Sciatic nerve (tissue), 2 donors: ENCODE measurements at regions of chr6 and their contacts with region 1.

Region 1: GRCh38 chr6:135535989-135536414 is 38.5 kb upstream of the AHI1 start:
- DNase-seq: no peak
- ATAC-seq: peak; percentile 55

Region 2: DNA sequence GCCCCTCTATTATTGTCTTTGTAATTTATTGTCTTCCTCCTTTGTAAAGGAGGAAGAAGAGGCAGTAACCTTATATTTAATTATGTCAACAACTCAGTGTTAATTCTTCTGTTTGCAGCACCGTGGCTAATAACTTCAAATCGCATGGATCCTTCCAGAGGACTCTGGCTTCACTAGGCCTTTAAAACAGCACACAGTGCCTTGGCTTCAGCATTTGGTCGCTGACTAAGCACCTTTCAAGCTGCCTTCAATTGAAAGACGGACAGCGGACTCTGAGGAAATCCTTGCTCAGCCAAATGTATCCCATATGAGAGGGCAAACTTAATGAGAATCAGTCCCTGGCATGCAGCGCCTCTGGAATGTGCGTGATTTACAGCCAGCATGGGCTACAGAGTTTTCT is 1282.3 kb before region 1 on chr6:
- intact Hi-C with region 1: no loop called
- DNase-seq: no peak
- ATAC-seq: peak; percentile 75

Region 3: DNA sequence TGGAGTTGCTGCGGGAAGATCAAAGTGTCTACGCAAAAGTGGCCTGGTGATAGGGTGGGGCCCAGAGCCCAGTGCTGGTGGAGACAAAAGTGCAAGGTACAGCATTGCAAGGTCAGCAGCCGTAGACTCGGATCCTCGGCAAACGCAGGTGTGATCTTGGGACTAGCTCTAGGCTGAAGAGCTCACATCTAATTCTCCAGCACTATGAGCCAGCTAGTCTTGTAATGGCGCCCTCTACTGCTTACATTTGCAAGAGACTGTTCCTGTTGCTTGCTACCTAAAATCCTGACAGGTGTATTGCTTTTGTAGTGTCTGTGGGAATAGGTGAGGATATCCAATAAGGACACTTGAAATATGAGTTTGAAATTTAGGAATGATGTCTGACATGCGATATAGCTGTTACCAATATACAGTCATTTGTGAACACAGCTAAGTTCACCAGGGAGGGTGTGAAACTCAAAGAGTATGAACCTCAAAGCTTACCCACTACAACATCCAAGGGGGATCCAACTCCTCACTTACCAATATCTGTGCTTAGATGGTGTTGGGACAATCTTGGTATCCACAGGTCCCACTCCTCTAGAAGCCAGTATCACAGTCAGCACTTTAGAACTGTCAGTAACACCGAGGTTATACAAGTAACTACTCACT is 373.9 kb after region 1 on chr6:
- intact Hi-C with region 1: no loop called
- DNase-seq: no peak
- ATAC-seq: peak; percentile 30

Region 4: GRCh38 chr6:136226027-136226673 is 690.1 kb after region 1 on chr6:
- intact Hi-C with region 1: loop called (anchors 10 kb)
- DNase-seq: peak; percentile 76
- ATAC-seq: peak; percentile 91